Calu3 (cell line): ENCODE measurements at regions of chr12 and their contacts with region 1.

Region 1: GRCh38 chr12:103548622-103549601 is 38.2 kb upstream of the STAB2 start:
- DNase-seq: peak; percentile 80
- H3K4me3 Mint-ChIP-seq: no peak overlapping the region
- H3K27ac Mint-ChIP-seq: no peak overlapping the region
- H3K4me1 Mint-ChIP-seq: no peaks in the 10 kb centered on the region
- H3K27me3 Mint-ChIP-seq: peaks cover 58% of the 10 kb centered on the region
- CTCF ChIP-seq: peak; percentile 87

Region 2: GRCh38 chr12:102816816-102817434 is 732.0 kb before region 1 on chr12:
- CTCF ChIA-PET with region 1: no interaction called
- intact Hi-C with region 1: loop called (anchors 5 kb)
- DNase-seq: peak; percentile 17
- H3K4me3 Mint-ChIP-seq: no peak overlapping the region
- H3K27ac Mint-ChIP-seq: no peak overlapping the region
- H3K4me1 Mint-ChIP-seq: peaks cover 11% of the 10 kb centered on the region
- H3K27me3 Mint-ChIP-seq: peaks cover 16% of the 10 kb centered on the region
- CTCF ChIP-seq: peak; percentile 68

Region 3: GRCh38 chr12:102879144-102879763 is 669.7 kb before region 1 on chr12:
- CTCF ChIA-PET with region 1: interaction called, 5 read pairs
- intact Hi-C with region 1: loop called (anchors 1 kb)
- DNase-seq: peak; percentile 65
- H3K4me3 Mint-ChIP-seq: no peak overlapping the region
- H3K27ac Mint-ChIP-seq: no peak overlapping the region
- H3K4me1 Mint-ChIP-seq: peaks cover 12% of the 10 kb centered on the region
- H3K27me3 Mint-ChIP-seq: no peaks in the 10 kb centered on the region
- CTCF ChIP-seq: peak; percentile 60

Region 4: DNA sequence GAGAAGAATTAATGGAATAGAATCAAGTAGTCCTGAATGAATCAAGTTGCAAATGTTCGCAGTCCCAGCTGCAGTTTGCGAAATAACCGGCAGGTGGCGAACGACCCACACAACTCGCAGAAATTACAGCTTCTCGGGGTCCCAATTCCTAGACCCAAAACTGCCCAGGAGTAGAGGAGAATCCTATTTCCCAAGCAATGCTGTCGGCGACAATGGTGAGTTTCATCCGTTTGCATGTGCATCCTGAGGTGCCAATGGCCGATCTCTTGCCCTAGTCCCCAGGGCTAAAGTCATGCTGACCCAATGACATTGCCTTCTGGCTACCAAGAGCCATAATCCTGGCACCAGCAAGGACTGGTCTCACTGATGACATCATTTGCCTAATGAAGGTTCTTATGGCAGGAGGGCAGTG is 600.0 kb before region 1 on chr12:
- CTCF ChIA-PET with region 1: interaction called, 8 read pairs
- intact Hi-C with region 1: loop called (anchors 1 kb)
- DNase-seq: peak; percentile 70
- H3K4me3 Mint-ChIP-seq: no peak overlapping the region
- H3K27ac Mint-ChIP-seq: no peak overlapping the region
- H3K4me1 Mint-ChIP-seq: no peaks in the 10 kb centered on the region
- H3K27me3 Mint-ChIP-seq: peaks cover 81% of the 10 kb centered on the region
- CTCF ChIP-seq: peak; percentile 89

Region 5: DNA sequence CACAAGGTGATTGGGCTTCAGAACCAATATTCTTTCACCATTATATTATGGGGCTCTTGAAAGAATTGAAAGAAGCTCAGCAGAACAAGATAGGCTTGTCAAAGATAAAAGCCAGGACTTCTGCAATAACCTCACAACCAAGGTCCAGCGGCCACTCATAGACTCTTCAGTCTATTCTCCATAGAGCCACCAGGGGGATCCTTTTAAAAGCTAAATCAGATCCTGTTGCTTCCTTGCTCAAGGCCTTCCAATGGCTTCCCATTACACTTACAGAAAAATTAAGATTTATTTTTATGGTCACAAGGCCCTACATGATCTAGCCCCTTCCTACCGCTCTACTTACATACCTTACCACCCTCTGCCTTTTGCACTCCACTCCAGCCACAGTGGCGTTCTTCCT is 222.7 kb before region 1 on chr12:
- CTCF ChIA-PET with region 1: no interaction called
- intact Hi-C with region 1: loop called (anchors 2 kb)
- DNase-seq: no peak
- H3K4me3 Mint-ChIP-seq: no peak overlapping the region
- H3K27ac Mint-ChIP-seq: no peak overlapping the region
- H3K4me1 Mint-ChIP-seq: no peaks in the 10 kb centered on the region
- H3K27me3 Mint-ChIP-seq: no peaks in the 10 kb centered on the region
- CTCF ChIP-seq: no peak

Region 6: DNA sequence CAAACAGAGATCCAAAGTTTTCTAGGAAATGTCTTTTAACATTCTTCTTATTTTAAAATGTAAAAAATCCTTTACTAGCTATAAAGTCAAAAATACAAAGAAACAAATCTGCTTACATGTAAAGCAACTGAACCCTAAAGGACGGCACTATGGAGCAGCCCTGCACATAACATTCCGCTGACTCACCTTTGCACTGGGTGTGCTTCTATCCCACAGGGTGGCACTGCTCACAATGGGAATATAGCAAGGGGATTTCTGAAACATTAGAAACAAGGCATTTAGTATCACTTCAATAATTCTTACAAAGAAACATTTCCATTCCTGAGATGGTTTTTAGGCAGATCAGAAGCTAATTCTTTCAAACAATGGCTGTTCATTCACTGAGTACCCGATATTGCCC is 147.5 kb before region 1 on chr12:
- CTCF ChIA-PET with region 1: no interaction called
- intact Hi-C with region 1: loop called (anchors 2 kb)
- DNase-seq: peak; percentile 15
- H3K4me3 Mint-ChIP-seq: no peak overlapping the region
- H3K27ac Mint-ChIP-seq: no peak overlapping the region
- H3K4me1 Mint-ChIP-seq: no peaks in the 10 kb centered on the region
- H3K27me3 Mint-ChIP-seq: peaks cover 7% of the 10 kb centered on the region
- CTCF ChIP-seq: no peak

Region 7: DNA sequence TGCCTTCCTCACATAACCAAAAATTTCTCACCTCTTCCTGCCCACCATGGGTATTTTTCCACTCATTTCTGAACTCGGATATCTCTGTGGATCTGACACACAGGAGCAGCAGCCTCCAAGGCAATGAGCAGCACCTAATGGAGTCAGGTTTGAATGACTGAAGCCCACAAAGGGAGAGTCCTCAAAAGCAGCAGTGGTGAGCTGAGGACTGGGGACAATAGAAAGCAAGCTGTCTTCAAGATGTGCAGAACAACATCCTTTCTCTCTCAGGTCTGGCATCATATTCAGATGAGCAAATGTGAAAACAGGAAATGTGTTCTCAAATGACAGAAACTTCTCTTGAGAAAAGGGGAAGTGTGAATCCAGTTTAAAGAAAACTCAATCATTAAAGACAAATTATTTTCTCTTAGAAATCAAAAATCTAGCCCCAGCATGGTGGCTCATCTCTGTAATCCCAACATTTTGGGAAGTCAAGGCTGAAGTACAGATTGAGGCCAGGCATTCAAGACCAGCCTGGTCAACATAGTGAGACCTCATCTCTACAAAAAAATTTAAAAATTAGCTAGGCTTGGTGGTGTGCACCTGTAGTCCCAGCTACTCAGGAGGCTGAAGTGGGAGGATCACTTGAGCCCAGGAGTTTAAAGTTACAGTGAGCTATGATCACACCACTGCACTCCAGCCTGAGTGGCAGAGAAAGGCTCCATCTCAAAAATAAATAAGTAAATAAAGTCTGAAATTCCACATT is 107.3 kb before region 1 on chr12:
- CTCF ChIA-PET with region 1: no interaction called
- intact Hi-C with region 1: no loop called
- DNase-seq: no peak
- H3K4me3 Mint-ChIP-seq: no peak overlapping the region
- H3K27ac Mint-ChIP-seq: no peak overlapping the region
- H3K4me1 Mint-ChIP-seq: no peaks in the 10 kb centered on the region
- H3K27me3 Mint-ChIP-seq: no peaks in the 10 kb centered on the region
- CTCF ChIP-seq: no peak

Region 8: GRCh38 chr12:103495479-103496456 is 53.1 kb before region 1 on chr12 and contains the start of gene C12orf42:
- CTCF ChIA-PET with region 1: interaction called, 6 read pairs
- intact Hi-C with region 1: loop called (anchors 2 kb)
- DNase-seq: peak; percentile 32
- H3K4me3 Mint-ChIP-seq: no peak within 1 kb of the TSS
- H3K27ac Mint-ChIP-seq: no peak within 1 kb of the TSS
- H3K4me1 Mint-ChIP-seq: no peaks in the 10 kb centered on the region
- H3K27me3 Mint-ChIP-seq: peaks cover 38% of the 10 kb centered on the region
- CTCF ChIP-seq: peak; percentile 25
- total RNA-seq, gene C12orf42: not detected in 2 replicates